Gastrocnemius medialis (tissue), 4 donors: ENCODE measurements at regions of chrX and their contacts with region 1.

Region 1: DNA sequence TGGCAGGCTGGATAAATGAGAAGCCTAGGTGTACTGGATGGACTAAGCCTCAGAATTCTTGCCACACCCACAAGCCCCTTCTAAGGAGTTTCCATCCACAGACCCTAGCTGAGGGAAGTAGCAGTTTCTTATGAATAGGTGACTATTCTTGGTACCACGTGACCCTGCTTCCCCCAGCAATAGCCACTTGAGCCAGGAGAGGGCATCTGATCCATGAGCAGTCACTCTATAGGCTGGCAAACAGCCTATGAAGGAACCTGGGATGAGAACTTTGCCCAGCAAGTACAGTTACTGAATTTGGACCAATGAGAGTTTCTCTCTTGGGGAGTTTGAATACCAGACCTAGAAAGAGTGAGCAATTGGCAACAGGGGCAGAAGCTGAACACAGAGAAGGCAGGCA is 84.0 kb downstream of the RTL9 start:
- DNase-seq: no peak
- ATAC-seq: no peak
- H3K4me3 ChIP-seq: no peak overlapping the region
- H3K27ac ChIP-seq: no peak overlapping the region
- H3K4me1 ChIP-seq: no peaks in the 10 kb centered on the region
- H3K27me3 ChIP-seq: peaks cover 0 to 8% (median 0%) of the 10 kb centered on the region in 3 donors
- CTCF ChIP-seq: no peak
- POLR2A ChIP-seq: no peak

Region 2: DNA sequence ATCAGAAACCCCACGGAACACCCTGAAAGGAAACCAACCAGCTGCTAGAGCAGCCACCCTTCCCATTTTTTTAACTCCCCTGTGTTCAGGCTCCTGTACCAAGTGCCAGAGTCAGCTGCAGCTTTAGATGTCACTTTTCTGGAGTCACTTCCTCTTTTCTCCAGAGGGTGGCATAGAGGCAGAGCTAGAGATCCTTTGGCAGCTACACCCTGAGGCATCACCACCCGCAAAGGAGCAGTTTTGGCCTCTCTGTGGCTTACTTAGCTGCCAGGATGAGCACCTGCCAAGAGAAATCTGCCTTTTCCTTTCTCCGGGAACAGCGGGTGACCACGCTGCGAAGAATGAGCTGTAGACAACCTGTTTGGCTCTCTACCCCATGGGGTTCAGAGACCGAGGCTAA is 411.0 kb after region 1 on chrX:
- in situ Hi-C with region 1: loop called in 1 of 4 experiments (anchors 10 kb)
- intact Hi-C with region 1: no loop called
- DNase-seq: no peak
- ATAC-seq: no peak
- H3K4me3 ChIP-seq: no peak overlapping the region
- H3K27ac ChIP-seq: no peak overlapping the region
- H3K4me1 ChIP-seq: no peaks in the 10 kb centered on the region
- H3K27me3 ChIP-seq: peaks cover 0 to 4% (median 0%) of the 10 kb centered on the region in 3 donors
- CTCF ChIP-seq: peak in 1 of 5 experiments; percentile 5
- POLR2A ChIP-seq: no peak